WTC11 (cell line): ENCODE measurements at regions of chr20 and their contacts with region 1.

Region 1: DNA sequence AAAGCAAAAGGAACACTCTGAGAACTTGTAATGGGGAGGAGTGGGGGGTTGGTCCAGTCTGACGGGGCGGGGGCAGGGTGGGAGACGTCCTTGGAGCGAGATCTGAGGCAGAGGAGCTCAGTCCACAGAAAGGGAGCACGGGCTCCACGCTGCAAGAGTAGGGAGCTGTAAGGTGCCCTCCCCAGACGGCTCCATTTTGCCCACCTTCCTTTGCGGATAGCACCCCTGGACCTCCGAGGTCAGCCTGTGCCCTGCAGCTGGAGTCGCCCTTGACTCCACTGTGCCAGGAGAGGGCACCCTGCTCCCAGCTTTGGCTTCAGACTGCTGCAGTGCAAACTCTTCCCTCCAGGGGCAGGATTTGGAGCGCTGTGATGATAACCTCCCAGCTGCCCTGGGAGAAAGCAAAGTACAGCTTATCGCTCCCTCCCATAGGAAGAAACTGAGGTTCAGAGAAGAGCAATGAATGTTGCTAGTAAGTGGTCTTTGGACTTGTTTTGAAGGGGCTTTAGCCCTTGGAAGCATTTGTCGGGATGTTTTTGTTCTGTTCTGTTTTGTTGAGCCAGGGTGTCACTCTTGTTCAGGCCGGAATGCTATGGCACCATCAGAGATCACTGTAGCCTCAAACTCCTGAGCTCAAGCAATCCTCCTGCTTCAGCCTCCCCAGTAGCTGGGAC is 9.5 kb upstream of the AHCY start:
- DNase-seq: peak; percentile 95
- ATAC-seq: peak; percentile 90
- H3K4me3 Mint-ChIP-seq: peak overlapping the region; percentile 81
- H3K27ac Mint-ChIP-seq: no peak overlapping the region
- H3K4me1 Mint-ChIP-seq: peaks cover 7% of the 10 kb centered on the region; the same call in 1 of the 2 replicates
- H3K27me3 Mint-ChIP-seq: peaks cover 16% of the 10 kb centered on the region
- CTCF ChIP-seq: peak; percentile 93

Region 2: GRCh38 chr20:34334654-34335407 is 22.1 kb after region 1 on chr20:
- CTCF ChIA-PET with region 1: interaction called, 83 read pairs
- POLR2A ChIA-PET with region 1: no interaction called
- DNase-seq: no peak
- ATAC-seq: no peak
- H3K4me3 Mint-ChIP-seq: no peak overlapping the region
- H3K27ac Mint-ChIP-seq: no peak overlapping the region; the same call in 1 of the 2 replicates
- H3K4me1 Mint-ChIP-seq: peaks cover 9% of the 10 kb centered on the region
- H3K27me3 Mint-ChIP-seq: no peaks in the 10 kb centered on the region
- CTCF ChIP-seq: no peak

Region 3: DNA sequence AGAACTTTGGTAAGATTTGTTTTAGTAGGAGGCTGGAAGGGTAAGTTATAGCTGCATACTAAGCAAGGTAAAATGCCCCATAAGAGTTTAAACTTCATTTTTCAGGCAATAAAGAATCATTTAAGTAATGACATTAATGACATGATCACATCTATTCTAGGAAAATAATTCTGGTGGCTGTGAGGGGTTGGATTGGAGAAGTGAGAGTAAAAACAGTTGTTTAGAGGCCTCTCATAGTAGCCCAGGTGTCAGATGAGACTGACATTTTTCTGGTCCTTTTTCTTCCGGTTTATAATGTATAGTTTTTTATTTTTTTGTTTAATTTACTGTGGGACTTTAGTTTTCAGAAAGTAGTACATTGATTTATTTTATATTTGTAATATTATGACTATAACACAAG is 91.2 kb after region 1 on chr20:
- CTCF ChIA-PET with region 1: interaction called, 62 read pairs
- POLR2A ChIA-PET with region 1: no interaction called
- DNase-seq: no peak
- ATAC-seq: no peak
- H3K4me3 Mint-ChIP-seq: no peak overlapping the region
- H3K27ac Mint-ChIP-seq: peak overlapping the region; percentile 64
- H3K4me1 Mint-ChIP-seq: peaks cover 31% of the 10 kb centered on the region
- H3K27me3 Mint-ChIP-seq: no peaks in the 10 kb centered on the region
- CTCF ChIP-seq: no peak

Region 4: GRCh38 chr20:34437330-34437986 is 124.8 kb after region 1 on chr20:
- CTCF ChIA-PET with region 1: interaction called, 20 read pairs
- POLR2A ChIA-PET with region 1: interaction called, 3 read pairs
- DNase-seq: no peak
- ATAC-seq: no peak
- H3K4me3 Mint-ChIP-seq: no peak overlapping the region
- H3K27ac Mint-ChIP-seq: no peak overlapping the region
- H3K4me1 Mint-ChIP-seq: no peaks in the 10 kb centered on the region
- H3K27me3 Mint-ChIP-seq: no peaks in the 10 kb centered on the region
- CTCF ChIP-seq: no peak

Region 5: DNA sequence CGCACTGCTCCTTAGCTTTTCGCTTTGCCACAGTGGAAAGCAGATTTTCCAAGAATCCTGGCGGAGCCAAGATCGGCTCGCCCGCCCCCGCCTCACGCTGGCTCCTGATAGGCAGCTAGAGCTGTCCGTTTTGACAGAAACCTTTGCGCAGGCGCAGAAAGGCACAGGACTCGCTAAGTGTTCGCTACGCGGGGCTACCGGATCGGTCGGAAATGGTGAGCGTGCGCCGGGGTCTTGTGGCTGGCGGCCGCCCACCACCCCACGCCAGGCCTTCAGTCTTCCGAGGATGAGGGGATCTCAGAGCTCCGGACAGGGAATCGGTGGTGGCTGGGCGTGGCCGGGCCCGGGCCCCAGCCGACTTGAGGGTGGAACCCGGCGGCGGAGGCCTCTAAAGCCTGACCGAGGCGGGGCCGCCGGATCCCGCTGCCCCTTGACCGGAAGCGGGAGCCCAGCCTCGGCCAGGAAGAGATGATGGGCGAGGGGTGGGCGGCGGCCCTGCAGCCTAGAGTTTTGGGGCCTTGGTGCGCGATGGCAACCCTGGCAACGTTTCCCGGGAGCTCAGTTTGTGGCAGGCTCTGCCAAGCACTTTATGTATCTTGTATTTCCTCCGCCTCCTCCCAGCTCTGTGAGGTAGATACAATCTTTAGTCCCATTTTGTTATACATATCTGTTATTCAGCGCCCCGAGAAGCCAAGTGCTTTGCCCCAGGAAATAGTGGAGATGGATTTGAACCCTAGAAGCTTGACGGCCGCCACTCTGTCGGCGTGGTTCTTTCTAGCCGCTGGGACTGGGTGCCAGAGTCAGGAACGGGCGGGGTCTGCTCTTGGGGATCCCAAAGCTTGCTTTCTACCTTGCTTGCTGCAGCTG is 203.8 kb after region 1 on chr20 and contains the start of gene DYNLRB1:
- CTCF ChIA-PET with region 1: interaction called, 104 read pairs
- POLR2A ChIA-PET with region 1: interaction called, 4 read pairs
- DNase-seq: peak; percentile 98
- ATAC-seq: peak; percentile 85
- H3K4me3 Mint-ChIP-seq: peak within 1 kb of the TSS; percentile 97
- H3K27ac Mint-ChIP-seq: peak within 1 kb of the TSS; percentile 98
- H3K4me1 Mint-ChIP-seq: peaks cover 20% of the 10 kb centered on the region
- H3K27me3 Mint-ChIP-seq: no peaks in the 10 kb centered on the region
- CTCF ChIP-seq: no peak
- total RNA-seq, gene DYNLRB1: 99.3 to 126 TPM (median 115 TPM) in 3 replicates

Region 6: GRCh38 chr20:34768096-34768495 is 455.4 kb after region 1 on chr20:
- CTCF ChIA-PET with region 1: interaction called, 10 read pairs
- POLR2A ChIA-PET with region 1: no interaction called
- DNase-seq: no peak
- ATAC-seq: no peak
- H3K4me3 Mint-ChIP-seq: no peak overlapping the region
- H3K27ac Mint-ChIP-seq: no peak overlapping the region
- H3K4me1 Mint-ChIP-seq: no peaks in the 10 kb centered on the region
- H3K27me3 Mint-ChIP-seq: no peaks in the 10 kb centered on the region
- CTCF ChIP-seq: no peak